H1 (cell line): ENCODE measurements at regions of chr2 and their contacts with region 1.

Region 1: DNA sequence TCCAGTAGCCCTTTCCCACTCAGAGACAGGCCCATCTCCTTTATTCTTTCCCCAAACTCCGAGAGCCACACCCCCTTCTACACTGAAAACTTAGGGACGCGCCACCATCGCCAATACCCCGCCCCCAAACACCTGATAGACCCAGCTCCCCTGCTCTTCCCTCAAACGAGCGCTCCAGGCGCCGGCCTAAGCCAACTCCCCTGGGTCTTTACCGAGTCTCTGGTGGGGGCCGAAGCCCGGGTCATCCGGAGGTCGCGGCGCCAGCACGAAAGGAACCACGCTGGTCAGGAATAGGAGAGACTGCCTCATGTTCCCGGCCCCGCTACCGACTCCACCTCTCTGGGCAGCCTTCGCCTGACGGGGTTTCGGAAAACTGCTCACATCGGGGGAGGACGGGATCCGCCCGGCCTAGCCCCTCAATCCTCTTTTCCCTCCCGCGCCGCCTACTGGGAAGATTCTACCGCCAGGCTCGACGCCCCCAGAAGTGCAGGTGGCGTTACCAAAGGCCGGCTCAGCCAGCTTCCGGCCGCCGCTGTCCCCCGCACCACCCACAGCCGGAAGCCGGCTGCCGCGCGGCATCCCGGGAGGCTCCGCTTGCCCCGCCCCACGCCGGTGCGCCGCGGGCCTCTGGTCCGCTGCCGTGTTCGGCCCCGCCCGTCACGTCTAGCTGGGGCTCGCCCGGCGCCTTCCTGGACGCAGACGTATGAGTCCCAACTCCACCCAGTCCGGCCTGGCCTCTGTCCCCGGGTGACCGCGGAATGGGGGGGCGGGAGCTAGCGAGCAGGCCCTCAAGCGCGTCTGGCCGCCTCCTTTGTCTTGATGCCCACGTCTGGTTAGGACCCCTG is at the start of gene ADAM17:
- DNase-seq: peak; percentile 82 to 91
- H3K4me3 ChIP-seq: peak within 1 kb of the TSS; percentile 74 to 92 (median 86)
- H3K27ac ChIP-seq: peak within 1 kb of the TSS; percentile 87
- H3K4me1 ChIP-seq: peaks cover 0 to 3% (median 0%) of the 10 kb centered on the region in 4 experiments; a peak in 1 of 7 replicates
- H3K27me3 ChIP-seq: no peaks in the 10 kb centered on the region
- CTCF ChIP-seq: peak; percentile 33 to 51 (median 40); a peak in 3 of 4 replicates
- EP300 ChIP-seq: no peak
- POLR2A ChIP-seq: peak in 1 of 2 experiments; percentile 87; a peak in 2 of 3 replicates
- RAD21 ChIP-seq: peak; percentile 4 to 13; a peak in 3 of 4 replicates
- total RNA-seq, gene ADAM17: 23.5 and 25.1 TPM in 2 replicates

Region 2: DNA sequence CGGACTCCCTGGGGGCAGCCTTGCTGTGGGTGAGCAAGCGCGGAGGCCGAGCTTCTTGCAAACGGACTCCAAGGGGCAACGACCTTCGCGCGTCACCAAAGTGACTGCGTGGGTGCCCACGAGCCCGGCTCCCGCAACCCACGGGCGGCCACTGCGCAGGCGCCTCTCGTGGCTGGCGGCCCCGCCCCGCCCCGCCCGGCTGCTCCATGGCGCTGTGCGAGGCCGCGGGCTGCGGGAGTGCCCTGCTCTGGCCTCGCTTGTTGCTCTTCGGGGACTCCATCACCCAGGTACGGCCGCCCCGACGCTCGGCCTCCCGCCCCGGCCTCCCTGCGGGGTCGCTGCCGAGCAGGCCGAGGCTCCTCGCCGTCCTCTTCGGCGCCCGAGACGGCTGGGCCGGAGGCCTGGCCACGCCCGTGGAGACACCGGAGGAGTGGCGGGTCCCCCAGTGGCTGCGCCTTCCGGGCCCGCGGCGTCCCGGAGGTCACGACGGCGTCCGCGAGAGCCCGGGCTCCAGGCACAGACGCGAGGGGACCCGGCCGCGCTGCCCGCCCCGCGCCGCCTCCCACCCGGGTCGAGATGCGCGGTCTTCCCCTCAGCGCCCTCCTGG is 81.1 kb before region 1 on chr2 and contains the start of gene IAH1:
- CTCF ChIA-PET with region 1: no interaction called
- POLR2A ChIA-PET with region 1: interaction called, 12 read pairs
- DNase-seq: peak in 1 of 2 experiments; percentile 54
- H3K4me3 ChIP-seq: peak within 1 kb of the TSS; percentile 29 to 64 (median 50)
- H3K27ac ChIP-seq: no peak within 1 kb of the TSS
- H3K4me1 ChIP-seq: peaks cover 0 to 4% (median 2%) of the 10 kb centered on the region in 4 experiments; a peak in 2 of 7 replicates
- H3K27me3 ChIP-seq: peaks cover 0 to 2% (median 0%) of the 10 kb centered on the region in 4 experiments; a peak in 2 of 7 replicates
- CTCF ChIP-seq: no peak
- EP300 ChIP-seq: no peak
- POLR2A ChIP-seq: no peak
- RAD21 ChIP-seq: no peak
- total RNA-seq, gene IAH1: 15.1 and 19.8 TPM in 2 replicates

Region 3: DNA sequence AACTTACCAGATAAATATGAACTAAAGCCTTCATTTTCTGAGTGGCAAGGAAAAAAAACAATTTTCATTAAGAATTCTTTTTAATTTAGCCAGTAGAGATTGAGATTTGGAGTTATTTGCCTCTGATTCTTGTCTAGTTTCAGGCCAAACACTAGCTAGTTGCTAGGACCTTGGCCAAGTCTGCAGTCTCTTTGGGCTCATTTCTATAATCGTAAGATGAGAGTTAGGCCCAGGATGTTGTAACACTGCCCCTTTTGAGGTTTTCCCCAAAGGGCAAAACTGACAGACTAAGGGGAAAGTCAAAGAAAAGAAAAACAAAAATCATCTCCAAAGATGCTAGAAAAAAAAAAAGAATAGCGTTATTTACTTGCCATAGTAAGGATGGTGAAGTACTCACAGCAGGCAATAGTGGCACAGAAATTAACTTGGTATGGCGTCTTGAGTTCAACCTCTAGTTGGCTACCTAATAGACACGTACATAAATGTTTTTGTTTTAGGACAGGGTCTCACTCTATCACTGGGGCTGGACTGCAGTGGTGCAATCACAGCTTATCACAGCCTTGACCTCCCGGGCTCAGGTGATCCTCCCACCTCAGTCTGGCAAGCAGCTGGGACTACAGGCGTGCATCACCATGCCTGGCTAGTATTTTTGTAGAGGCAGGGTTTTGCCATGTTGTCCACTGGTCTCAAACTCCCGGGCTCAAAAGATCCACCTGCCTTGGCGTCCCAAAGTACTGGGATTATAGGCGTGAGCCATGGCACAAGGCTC is 23.1 kb after region 1 on chr2:
- CTCF ChIA-PET with region 1: interaction called, 4 read pairs
- POLR2A ChIA-PET with region 1: interaction called, 26 read pairs
- DNase-seq: no peak
- H3K4me3 ChIP-seq: no peak overlapping the region
- H3K27ac ChIP-seq: no peak overlapping the region
- H3K4me1 ChIP-seq: no peaks in the 10 kb centered on the region
- H3K27me3 ChIP-seq: no peaks in the 10 kb centered on the region
- CTCF ChIP-seq: no peak
- EP300 ChIP-seq: no peak
- POLR2A ChIP-seq: no peak
- RAD21 ChIP-seq: no peak

Region 4: DNA sequence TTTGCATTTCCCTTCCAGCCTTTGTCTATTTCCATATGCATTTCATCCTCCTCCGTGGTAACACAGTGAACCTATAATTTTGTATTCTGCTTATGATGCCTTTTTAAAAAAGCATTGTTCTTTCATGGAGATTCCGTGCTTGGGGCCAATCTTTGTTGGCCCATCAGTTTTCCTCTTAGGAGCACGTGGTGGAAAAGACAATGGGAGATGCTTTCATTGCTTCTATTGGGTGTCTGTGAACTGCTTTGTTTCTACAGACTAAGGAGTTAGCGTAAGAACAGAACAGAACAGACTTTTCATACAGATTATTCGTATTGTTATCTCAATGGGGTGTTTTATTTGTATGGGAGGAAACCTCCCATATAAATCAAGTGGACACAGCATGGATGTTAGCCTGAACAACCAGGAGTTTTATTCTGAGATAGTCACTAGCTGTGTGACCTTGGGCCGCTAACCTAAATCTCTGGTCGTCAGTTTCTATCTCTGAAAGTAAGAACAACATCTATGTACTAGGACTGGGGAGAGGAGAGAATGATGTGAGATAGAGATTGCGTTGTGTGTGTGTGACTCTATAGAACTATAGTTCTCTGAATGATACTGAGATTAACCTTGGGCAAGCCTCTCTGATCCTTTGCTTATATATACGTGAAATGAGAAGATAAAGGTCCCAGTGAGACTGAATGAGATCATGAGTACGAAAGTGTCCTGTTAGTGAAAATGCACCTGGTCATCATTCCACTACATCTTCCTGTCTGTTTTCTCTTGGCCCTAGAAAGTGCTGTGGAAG is 98.2 kb after region 1 on chr2:
- CTCF ChIA-PET with region 1: no interaction called
- POLR2A ChIA-PET with region 1: no interaction called
- DNase-seq: no peak
- H3K4me3 ChIP-seq: no peak overlapping the region
- H3K27ac ChIP-seq: no peak overlapping the region
- H3K4me1 ChIP-seq: peaks cover 2 to 7% (median 3%) of the 10 kb centered on the region in 4 experiments
- H3K27me3 ChIP-seq: no peaks in the 10 kb centered on the region
- CTCF ChIP-seq: no peak
- EP300 ChIP-seq: no peak
- POLR2A ChIP-seq: no peak
- RAD21 ChIP-seq: no peak